ENCODE measurements at regions of chr1 and their contacts with region 1.

Region 1: GRCh38 chr1:40064797-40065499 is 24.4 kb downstream of the CAP1 start:
- DNase-seq: no peak
- ATAC-seq: no peak
- H3K4me3 ChIP-seq: no peak overlapping the region
- H3K27ac ChIP-seq: no peak overlapping the region
- H3K4me1 ChIP-seq: peaks cover 9% of the 10 kb centered on the region
- H3K27me3 ChIP-seq: no peaks in the 10 kb centered on the region
- CTCF ChIP-seq: no peak

Region 2: DNA sequence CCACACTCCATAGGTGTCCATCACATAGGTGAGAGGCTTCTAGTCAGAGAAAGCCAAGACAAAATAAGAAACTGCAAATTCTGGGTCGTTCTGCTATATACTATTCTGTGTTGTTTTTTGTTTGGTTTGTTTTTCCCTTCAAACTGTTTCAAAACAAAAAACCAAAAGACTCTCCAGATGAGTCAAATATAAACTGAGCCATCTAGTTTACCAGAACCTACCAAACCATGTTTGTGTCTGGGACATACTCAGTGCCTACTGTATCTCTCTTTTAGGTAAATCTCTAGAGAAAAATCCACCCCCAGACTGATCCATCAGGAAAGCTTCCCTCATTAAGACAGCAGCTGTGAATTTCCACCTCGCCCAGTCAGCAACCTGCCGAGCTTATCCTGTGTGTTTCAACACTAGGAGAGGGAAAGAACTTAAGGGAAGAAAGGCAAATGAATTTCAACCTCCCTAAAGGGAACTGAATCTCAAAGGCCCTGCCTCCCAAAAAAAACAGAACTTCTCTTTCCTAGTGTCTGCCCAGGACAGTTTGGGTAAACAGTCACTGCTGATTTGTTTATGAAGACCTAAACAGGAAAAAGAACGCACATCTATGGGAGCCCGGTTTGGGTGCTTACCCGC is 14.9 kb after region 1 on chr1:
- CTCF ChIA-PET with region 1: no interaction called
- POLR2A ChIA-PET with region 1: interaction called, 12 read pairs
- intact Hi-C with region 1: no loop called
- DNase-seq: no peak
- ATAC-seq: no peak
- H3K4me3 ChIP-seq: no peak overlapping the region
- H3K27ac ChIP-seq: no peak overlapping the region
- H3K4me1 ChIP-seq: peaks cover 15% of the 10 kb centered on the region
- H3K27me3 ChIP-seq: no peaks in the 10 kb centered on the region
- CTCF ChIP-seq: no peak

Measured in PC-3 (cell line).